Dorsolateral prefrontal cortex (tissue), 120 donors: ENCODE measurements at regions of chr13 and their contacts with region 1.

Region 1: DNA sequence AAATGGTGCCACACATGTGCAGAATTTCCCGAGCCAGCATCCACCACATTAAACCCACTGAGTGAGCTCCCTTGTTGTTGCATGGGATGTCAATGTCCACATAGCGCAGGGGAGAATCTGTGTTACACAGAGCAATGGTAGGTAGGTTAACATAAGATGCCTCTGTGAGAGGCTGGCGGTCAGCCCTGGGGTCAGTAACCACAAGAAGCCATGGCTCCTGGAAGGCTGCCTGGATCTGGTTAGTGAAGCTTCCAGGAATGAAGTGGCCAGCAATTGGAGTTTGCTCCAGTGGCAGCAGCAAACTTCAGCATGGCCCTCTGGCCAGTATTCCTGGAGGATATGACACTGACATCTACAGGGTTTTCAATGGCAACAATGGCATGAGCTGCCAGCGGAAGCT is 37.0 kb upstream of the PCDH9 start:
- DNase-seq: no peak
- H3K4me3 ChIP-seq: no peak overlapping the region
- H3K27ac ChIP-seq: no peak overlapping the region
- H3K27me3 ChIP-seq: no peaks in the 10 kb centered on the region
- CTCF ChIP-seq: no peak

Region 2: DNA sequence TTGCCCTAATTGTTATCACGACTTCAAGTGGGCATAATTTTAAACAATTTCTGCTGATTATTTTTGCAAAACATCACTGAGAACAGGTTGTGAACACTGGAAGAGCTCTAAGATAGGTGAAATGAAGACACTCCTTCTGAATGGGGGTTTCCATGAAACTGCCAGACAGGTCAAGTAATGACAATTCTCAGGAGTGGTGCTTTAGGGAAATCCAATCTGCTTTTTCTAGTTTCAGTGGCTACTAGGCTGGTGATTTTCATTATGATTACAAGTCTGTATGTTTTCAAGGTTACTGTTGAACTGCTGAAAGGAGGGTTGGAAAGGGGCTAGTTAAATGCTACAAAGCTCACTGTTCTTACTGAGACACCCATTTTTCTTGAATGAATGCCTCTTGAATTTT is 1761.2 kb before region 1 on chr13:
- intact Hi-C with region 1: loop called in 1 of 2 experiments (anchors 10 kb)
- DNase-seq: no peak
- H3K4me3 ChIP-seq: no peak overlapping the region
- H3K27ac ChIP-seq: no peak overlapping the region
- H3K27me3 ChIP-seq: no peaks in the 10 kb centered on the region
- CTCF ChIP-seq: no peak

Region 3: DNA sequence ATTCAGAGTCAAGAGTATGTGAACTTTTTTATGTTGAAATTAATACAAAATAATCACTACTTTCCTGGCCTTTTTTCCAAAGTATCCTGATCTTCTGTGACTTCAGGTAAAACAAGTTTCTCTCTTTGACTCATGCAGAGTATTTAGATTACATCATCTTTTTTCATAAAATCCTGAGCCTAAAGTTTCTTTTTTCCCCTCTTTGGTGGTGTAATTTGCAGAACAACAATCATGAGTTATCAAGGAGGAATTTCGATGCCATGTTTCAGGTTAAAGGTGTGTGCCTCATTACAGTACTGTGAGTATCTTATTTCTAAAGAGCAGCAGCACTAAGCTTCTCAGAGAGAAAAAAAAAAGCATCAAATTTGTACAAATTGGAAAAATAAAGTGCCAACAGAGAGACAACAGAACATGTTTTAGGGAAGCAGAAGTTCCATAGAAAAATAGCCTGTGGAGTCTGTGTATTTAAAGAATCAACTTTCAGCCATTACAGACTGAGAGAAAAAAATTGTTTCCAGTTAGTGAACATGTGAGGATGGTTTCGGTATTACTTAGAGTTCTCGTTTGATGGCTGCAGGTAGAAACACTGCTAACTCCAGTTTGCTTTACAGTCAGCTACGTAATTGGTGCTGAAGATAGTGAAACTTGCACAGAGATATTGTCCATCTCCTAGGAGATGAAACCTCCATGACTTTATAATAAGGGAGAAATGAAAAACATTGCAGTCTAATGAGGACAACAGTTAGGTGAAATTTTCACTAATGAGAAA is 41.1 kb after region 1 on chr13:
- intact Hi-C with region 1: no loop called
- DNase-seq: no peak
- H3K4me3 ChIP-seq: no peak overlapping the region
- H3K27ac ChIP-seq: no peak overlapping the region
- H3K27me3 ChIP-seq: peaks cover 0 to 4% (median 0%) of the 10 kb centered on the region in 45 donors
- CTCF ChIP-seq: no peak